PC-9 (cell line): ENCODE measurements at regions of chr3 and their contacts with region 1.

Region 1: DNA sequence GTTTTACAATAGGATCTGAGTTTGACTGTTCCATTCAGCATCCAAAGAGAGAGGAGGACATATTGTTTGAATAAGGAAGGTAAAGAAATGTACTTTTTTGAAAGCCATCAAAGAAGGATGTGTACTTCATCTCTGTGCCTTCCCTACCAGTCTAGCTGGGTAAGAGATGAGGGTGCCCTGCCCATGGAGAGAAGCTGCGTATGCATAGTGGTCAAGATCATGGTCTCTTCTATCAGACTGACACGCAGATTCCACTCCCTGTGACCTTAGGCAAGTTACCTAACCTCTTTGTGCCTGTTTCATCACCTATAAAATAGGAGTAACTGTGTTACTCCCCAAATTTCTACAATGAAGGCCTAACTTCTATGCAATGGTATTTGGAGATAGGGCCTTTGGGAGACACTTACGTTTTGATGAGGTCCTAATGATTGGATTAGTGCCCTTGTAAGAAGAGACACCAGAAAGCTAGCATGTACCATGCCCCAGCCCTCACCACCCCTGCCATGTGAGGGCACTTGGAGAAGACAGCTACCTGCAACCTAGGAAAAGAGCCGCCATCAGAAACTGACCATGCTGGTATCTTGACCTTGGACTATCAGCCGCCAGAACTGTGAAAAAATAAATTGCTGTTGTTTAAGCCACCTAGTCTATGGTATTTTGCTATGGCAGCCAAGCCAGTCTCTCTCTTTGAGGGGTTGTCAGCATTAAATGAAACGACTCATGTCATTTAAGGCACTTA is 4.6 kb upstream of the OSBPL11 start:
- DNase-seq: no peak
- H3K4me3 ChIP-seq: no peak overlapping the region
- H3K27ac ChIP-seq: no peak overlapping the region
- H3K4me1 ChIP-seq: peaks cover 21% of the 10 kb centered on the region
- H3K27me3 ChIP-seq: no peaks in the 10 kb centered on the region
- CTCF ChIP-seq: no peak

Region 2: DNA sequence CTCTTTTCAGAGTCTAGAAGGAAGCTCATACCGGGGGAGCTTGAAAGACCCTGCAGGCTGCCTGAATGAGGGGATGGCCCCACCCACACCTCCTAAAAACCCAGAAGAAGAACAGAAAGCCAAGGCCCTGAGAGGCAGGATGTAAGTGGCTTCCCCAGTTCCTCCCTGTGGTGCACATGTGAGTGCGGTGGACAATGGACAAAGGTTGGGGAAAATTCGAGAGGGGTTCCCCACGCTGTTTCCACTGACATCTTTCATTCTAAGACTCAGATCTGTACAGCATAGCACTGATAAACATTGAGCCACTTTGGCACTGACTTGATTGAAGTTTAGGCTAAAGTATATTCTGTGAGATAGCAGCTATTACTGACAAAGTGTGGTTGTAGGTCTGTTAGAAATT is 949.1 kb before region 1 on chr3:
- CTCF ChIA-PET with region 1: no interaction called
- POLR2A ChIA-PET with region 1: interaction called, 10 read pairs
- intact Hi-C with region 1: no loop called
- DNase-seq: no peak
- H3K4me3 ChIP-seq: no peak overlapping the region
- H3K27ac ChIP-seq: no peak overlapping the region
- H3K4me1 ChIP-seq: no peaks in the 10 kb centered on the region
- H3K27me3 ChIP-seq: no peaks in the 10 kb centered on the region
- CTCF ChIP-seq: no peak

Region 3: DNA sequence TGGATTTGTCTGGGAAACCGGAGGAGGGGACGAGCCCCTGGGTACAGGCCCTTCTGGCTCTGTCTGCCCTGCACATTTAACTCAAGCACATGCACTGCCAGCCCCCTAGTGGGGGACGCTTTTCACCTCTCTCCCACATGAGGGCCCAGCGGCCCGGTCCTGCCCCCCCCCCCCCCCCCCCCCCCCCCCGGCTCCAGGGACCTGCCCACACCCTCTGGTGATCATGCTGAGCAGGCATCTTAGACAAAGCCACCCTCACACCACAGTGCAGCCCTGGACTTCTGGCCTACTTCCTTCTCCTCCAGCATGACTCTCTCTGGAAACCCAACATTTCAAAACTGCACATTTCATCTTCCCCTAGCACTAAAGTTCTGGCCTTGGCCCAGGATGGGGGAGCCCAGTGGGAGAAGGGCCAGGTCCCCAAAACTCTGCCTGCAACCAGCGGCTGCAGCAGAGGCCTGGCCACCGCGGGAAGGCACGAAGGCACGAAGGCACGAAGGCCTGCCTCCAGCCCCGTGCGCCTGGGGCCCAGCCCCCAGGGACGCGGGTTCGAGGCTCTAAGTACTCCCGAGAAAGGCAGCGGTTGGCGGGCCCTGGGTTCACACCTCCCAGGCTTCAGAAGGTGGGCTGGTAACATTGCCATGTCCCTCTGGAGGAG is 743.3 kb after region 1 on chr3:
- CTCF ChIA-PET with region 1: no interaction called
- POLR2A ChIA-PET with region 1: no interaction called
- intact Hi-C with region 1: no loop called
- DNase-seq: no peak
- H3K4me3 ChIP-seq: no peak overlapping the region
- H3K27ac ChIP-seq: no peak overlapping the region
- H3K4me1 ChIP-seq: no peaks in the 10 kb centered on the region
- H3K27me3 ChIP-seq: peaks cover 25% of the 10 kb centered on the region
- CTCF ChIP-seq: no peak